ENCODE measurements at regions of chr13 and their contacts with region 1.

Region 1: GRCh38 chr13:105925496-105925895 is 610.0 kb downstream of the EFNB2 start:
- DNase-seq: no peak
- ATAC-seq: no peak
- H3K4me3 ChIP-seq: no peak overlapping the region
- H3K27ac ChIP-seq: no peak overlapping the region
- H3K4me1 ChIP-seq: no peaks in the 10 kb centered on the region
- H3K27me3 ChIP-seq: no peaks in the 10 kb centered on the region
- CTCF ChIP-seq: no peak

Region 2: DNA sequence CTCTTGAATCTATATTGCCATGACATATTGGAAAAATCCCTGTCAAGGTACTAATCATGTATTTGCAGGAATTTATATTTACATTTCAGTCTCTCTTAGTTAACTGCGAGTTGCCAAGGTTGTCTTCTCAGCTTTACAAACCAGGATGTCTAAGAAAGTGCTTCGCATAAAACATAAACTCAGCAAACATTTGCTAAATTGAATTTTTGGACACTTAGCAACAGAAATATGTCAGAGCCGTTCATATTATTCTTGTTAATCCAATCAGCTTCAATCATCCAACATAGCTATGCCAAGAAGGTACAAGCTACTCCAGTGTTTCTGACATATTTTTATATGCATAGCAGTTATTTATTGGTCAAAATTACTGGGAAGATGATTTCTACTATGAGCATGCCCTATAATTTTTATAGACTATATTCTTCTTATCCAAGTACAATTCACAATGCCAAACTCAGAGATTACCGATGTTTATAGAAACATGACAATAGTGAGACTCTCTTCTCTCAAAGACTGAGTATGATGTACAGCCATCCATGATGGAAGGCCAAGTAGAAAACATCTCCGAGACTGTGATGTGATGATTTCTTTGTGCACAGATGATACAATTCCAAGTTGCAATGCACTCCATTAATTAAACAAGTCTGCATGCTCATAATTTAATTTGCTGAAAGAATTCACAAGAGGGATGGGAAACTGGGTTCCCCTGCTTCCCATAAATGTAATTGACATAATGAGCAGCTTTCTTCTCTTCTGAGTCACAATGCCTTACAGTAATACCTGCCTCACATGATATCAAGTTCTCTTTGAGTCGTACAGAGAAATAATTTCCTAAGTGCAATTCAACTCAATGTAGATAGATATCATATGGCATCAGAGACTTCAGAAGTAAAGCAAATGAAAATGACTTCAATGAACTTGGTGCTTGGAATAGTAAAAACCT is 166.3 kb before region 1 on chr13:
- CTCF ChIA-PET with region 1: no interaction called
- POLR2A ChIA-PET with region 1: interaction called, 10 read pairs
- in situ Hi-C with region 1: no loop called
- intact Hi-C with region 1: no loop called
- DNase-seq: no peak
- ATAC-seq: no peak
- H3K4me3 ChIP-seq: no peak overlapping the region
- H3K27ac ChIP-seq: no peak overlapping the region
- H3K4me1 ChIP-seq: no peaks in the 10 kb centered on the region
- H3K27me3 ChIP-seq: no peaks in the 10 kb centered on the region
- CTCF ChIP-seq: no peak

Region 3: GRCh38 chr13:106230450-106230849 is 305.0 kb after region 1 on chr13:
- CTCF ChIA-PET with region 1: no interaction called
- POLR2A ChIA-PET with region 1: no interaction called
- in situ Hi-C with region 1: no loop called
- intact Hi-C with region 1: no loop called
- DNase-seq: no peak
- ATAC-seq: no peak
- H3K4me3 ChIP-seq: no peak overlapping the region
- H3K27ac ChIP-seq: no peak overlapping the region
- H3K4me1 ChIP-seq: no peaks in the 10 kb centered on the region
- H3K27me3 ChIP-seq: no peaks in the 10 kb centered on the region
- CTCF ChIP-seq: no peak